Prostate gland (tissue), 2 donors: ENCODE measurements at regions of chr2 and their contacts with region 1.

Region 1: GRCh38 chr2:130797493-130798435 is 39.0 kb upstream of the ARHGEF4 start:
- DNase-seq: peak; percentile 88
- H3K4me3 ChIP-seq: peak overlapping the region; percentile 78 to 89
- H3K27ac ChIP-seq: peak overlapping the region; percentile 90 to 95
- H3K4me1 ChIP-seq: peaks cover 5% of the 10 kb centered on the region
- H3K27me3 ChIP-seq: no peaks in the 10 kb centered on the region
- CTCF ChIP-seq: peak; percentile 72 to 95 (median 88)
- POLR2A ChIP-seq: peak; percentile 7

Region 2: GRCh38 chr2:130744287-130745117 is 53.3 kb before region 1 on chr2:
- intact Hi-C with region 1: no loop called
- DNase-seq: no peak
- H3K4me3 ChIP-seq: no peak overlapping the region
- H3K27ac ChIP-seq: no peak overlapping the region
- H3K4me1 ChIP-seq: no peaks in the 10 kb centered on the region
- H3K27me3 ChIP-seq: no peaks in the 10 kb centered on the region
- CTCF ChIP-seq: no peak
- POLR2A ChIP-seq: no peak

Region 3: DNA sequence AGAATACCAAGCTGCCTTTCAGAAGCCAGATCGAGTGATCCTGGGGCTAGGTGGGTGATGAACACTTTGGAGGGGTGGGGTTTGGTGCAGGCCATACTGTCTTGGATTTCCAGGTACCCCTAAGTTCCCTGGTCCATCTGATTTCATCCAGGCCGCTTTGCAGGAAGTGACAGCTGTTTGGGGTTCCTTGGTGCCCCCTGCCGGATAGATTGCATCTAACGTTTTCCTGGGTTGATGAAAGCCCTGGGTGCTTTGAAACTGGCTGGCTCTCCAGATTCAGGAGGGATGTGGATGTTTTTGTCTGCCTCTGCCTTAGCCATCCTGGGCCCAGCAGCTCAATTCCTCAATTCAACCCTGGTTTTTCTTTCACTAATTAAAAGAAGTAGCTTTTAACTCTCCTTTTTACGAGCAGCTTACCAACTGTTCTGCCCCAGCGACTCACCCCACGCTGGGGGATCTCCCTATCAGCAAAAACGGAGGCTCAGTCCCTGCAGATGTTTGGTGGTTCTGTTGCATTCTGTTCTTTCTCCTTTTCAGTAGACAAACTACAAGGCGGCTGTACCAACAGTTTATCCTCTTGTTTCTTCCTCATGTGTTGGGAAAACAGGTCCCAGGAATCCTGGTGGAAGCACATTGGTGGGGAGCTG is 76.1 kb after region 1 on chr2:
- intact Hi-C with region 1: loop called (anchors 1 kb)
- DNase-seq: peak; percentile 64
- H3K4me3 ChIP-seq: no peak overlapping the region
- H3K27ac ChIP-seq: no peak overlapping the region
- H3K4me1 ChIP-seq: no peaks in the 10 kb centered on the region
- H3K27me3 ChIP-seq: no peaks in the 10 kb centered on the region
- CTCF ChIP-seq: peak in 3 of 4 experiments; percentile 52 to 68 (median 60)
- POLR2A ChIP-seq: no peak

Region 4: DNA sequence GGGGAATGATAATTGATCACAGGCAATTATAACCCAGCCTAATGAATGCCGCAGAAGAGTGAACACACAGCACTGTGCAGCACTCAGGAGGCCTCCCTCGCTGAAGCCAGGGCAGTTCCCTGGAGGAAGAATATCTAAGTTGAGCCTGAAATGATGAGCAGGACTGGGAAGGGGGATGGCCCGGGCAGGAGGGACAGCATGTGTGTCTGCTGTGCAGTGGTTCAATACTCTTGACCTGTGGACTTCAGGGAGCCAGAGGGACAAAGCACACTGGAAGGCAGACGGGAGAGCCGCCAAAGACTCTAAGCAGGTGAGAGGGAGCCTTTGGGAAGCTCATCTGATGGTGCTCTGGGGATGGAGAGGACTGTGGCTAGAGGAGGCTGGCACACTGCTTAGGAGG is 101.5 kb after region 1 on chr2:
- intact Hi-C with region 1: no loop called
- DNase-seq: no peak
- H3K4me3 ChIP-seq: no peak overlapping the region
- H3K27ac ChIP-seq: no peak overlapping the region
- H3K4me1 ChIP-seq: no peaks in the 10 kb centered on the region
- H3K27me3 ChIP-seq: no peaks in the 10 kb centered on the region
- CTCF ChIP-seq: no peak
- POLR2A ChIP-seq: no peak

Region 5: GRCh38 chr2:130920415-130921163 is 122.8 kb after region 1 on chr2:
- intact Hi-C with region 1: loop called (anchors 2 kb)
- DNase-seq: peak; percentile 46
- H3K4me3 ChIP-seq: no peak overlapping the region
- H3K27ac ChIP-seq: no peak overlapping the region
- H3K4me1 ChIP-seq: no peaks in the 10 kb centered on the region
- H3K27me3 ChIP-seq: peaks cover 2% of the 10 kb centered on the region
- CTCF ChIP-seq: peak; percentile 44 to 70 (median 68)
- POLR2A ChIP-seq: no peak

Region 6: GRCh38 chr2:131093006-131093695 is 295.4 kb after region 1 on chr2 and contains the start of gene FAM168B:
- intact Hi-C with region 1: loop called (anchors 10 kb)
- DNase-seq: peak; percentile 81
- H3K4me3 ChIP-seq: peak within 1 kb of the TSS; percentile 86 to 93
- H3K27ac ChIP-seq: peak within 1 kb of the TSS; percentile 90 to 98
- H3K4me1 ChIP-seq: no peaks in the 10 kb centered on the region
- H3K27me3 ChIP-seq: no peaks in the 10 kb centered on the region
- CTCF ChIP-seq: no peak
- POLR2A ChIP-seq: peak; percentile 80
- total RNA-seq, gene FAM168B: 125 to 192 TPM